B cell (primary cell): ENCODE measurements at regions of chr5 and their contacts with region 1.

Region 1: DNA sequence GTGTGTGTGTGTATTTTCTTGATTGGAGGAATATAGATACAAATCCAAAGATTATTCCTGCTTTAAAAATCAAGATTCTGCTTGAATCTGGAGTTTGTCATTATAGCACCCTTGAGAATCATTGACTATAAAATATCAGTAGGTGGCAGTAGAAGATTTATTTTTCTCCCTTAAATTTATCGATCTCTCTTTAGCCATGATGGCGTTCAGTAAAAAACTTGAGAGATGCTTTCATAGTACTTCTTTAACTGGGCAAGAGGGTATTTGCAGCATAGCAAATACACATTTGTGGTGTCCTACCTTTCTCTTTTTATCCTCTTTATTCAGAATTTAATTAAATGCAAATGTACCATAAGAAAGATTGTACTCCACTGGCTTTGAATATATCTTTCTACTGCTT is 307.7 kb downstream of the ADGRV1 start:
- DNase-seq: peak; percentile 47
- ATAC-seq: peak; percentile 31
- H3K4me3 ChIP-seq: no peak overlapping the region
- H3K4me3 Mint-ChIP-seq: no peak overlapping the region
- H3K27ac ChIP-seq: no peak overlapping the region
- H3K27ac Mint-ChIP-seq: no peak overlapping the region
- H3K4me1 ChIP-seq: no peaks in the 10 kb centered on the region
- H3K4me1 Mint-ChIP-seq: peaks cover 2% of the 10 kb centered on the region
- H3K27me3 ChIP-seq: peaks cover 0 to 3% (median 0%) of the 10 kb centered on the region in 4 experiments
- H3K27me3 Mint-ChIP-seq: peaks cover 11% of the 10 kb centered on the region
- CTCF ChIP-seq: peak; percentile 73

Region 2: GRCh38 chr5:90854169-90854568 is 12.2 kb before region 1 on chr5:
- CTCF ChIA-PET with region 1: interaction called, 11 read pairs
- POLR2A ChIA-PET with region 1: no interaction called
- intact Hi-C with region 1: no loop called
- DNase-seq: no peak
- ATAC-seq: no peak
- H3K4me3 ChIP-seq: no peak overlapping the region
- H3K4me3 Mint-ChIP-seq: no peak overlapping the region
- H3K27ac ChIP-seq: no peak overlapping the region
- H3K27ac Mint-ChIP-seq: no peak overlapping the region
- H3K4me1 ChIP-seq: no peaks in the 10 kb centered on the region
- H3K4me1 Mint-ChIP-seq: no peaks in the 10 kb centered on the region
- H3K27me3 ChIP-seq: no peaks in the 10 kb centered on the region
- H3K27me3 Mint-ChIP-seq: no peaks in the 10 kb centered on the region
- CTCF ChIP-seq: no peak

Region 3: DNA sequence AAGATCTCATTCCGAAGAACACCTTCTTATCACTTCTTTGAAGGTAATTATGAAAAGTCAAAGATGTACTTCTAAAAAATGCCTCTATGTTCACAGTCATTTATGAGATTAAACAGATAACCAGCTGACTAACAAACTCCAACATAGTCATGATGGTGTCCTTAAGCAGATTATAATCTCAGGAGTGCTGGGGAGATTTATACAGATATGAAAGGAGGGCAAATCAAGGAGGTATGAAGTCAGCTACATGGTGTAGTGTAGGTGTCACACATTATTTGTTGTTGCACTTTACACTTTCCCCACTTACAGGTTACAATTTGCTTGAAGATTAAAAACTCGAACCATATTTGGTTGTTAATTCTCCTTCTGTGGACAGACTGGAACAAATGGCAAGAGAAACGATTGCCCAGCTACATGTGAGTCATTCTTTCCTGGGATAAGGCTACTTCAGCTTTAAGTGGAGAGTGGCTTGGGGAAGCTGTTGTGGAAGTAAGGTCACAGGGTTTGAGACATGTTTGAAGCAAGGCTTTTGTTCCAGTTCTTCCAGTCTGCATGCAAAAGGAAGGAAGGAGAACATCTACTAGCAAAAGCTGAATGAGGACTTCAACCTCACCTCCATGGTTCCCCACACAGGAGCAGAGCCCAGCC is 12.3 kb after region 1 on chr5:
- CTCF ChIA-PET with region 1: interaction called, 15 read pairs
- POLR2A ChIA-PET with region 1: no interaction called
- intact Hi-C with region 1: no loop called
- DNase-seq: no peak
- ATAC-seq: no peak
- H3K4me3 ChIP-seq: no peak overlapping the region
- H3K4me3 Mint-ChIP-seq: no peak overlapping the region
- H3K27ac ChIP-seq: no peak overlapping the region
- H3K27ac Mint-ChIP-seq: no peak overlapping the region
- H3K4me1 ChIP-seq: no peaks in the 10 kb centered on the region
- H3K4me1 Mint-ChIP-seq: no peaks in the 10 kb centered on the region
- H3K27me3 ChIP-seq: no peaks in the 10 kb centered on the region
- H3K27me3 Mint-ChIP-seq: peaks cover 17% of the 10 kb centered on the region
- CTCF ChIP-seq: no peak

Region 4: DNA sequence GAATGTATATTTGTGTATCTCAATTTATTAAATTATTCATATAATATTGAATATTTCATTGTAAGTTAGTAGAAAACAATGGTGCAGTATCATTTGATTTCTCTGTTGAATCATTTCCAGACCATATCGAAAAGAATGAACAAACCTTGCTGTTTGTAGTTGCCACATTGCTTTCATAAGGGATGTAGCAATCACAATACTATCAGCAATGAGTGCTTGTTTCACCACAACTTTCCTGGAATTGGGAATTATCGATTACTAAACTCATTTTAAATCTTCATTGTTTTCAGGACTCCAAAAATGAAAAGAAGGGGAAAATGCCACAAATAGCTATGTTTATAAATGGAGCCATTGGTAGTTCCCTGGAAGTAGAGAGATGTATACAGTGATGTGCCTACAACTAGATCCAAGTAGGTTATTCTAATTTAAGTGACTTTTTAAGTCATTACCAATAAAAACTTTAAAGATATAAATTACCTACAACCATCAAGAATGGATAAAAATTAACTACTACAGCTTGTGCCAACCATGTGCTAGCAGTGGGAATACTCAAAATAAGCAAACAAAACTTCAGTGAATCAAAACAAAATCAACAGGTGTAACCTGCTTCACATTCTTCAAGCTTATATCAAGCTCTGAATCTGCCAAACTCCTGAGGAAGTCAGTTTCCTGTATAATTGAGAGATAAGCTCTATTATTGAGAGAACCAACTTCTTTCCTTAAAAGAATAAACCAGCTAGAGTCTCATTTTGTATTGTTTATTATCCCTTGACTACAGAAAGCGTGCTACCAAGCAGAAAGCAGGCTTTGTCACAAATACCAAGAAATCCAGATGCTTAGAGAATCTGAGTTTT is 50.8 kb after region 1 on chr5:
- CTCF ChIA-PET with region 1: no interaction called
- POLR2A ChIA-PET with region 1: no interaction called
- intact Hi-C with region 1: no loop called
- DNase-seq: no peak
- ATAC-seq: no peak
- H3K4me3 ChIP-seq: no peak overlapping the region
- H3K4me3 Mint-ChIP-seq: no peak overlapping the region
- H3K27ac ChIP-seq: no peak overlapping the region
- H3K27ac Mint-ChIP-seq: no peak overlapping the region
- H3K4me1 ChIP-seq: no peaks in the 10 kb centered on the region
- H3K4me1 Mint-ChIP-seq: no peaks in the 10 kb centered on the region
- H3K27me3 ChIP-seq: peaks cover 0 to 2% (median 0%) of the 10 kb centered on the region in 4 experiments
- H3K27me3 Mint-ChIP-seq: peaks cover 8% of the 10 kb centered on the region
- CTCF ChIP-seq: no peak

Region 5: GRCh38 chr5:90932052-90932699 is 65.8 kb after region 1 on chr5:
- CTCF ChIA-PET with region 1: interaction called, 10 read pairs
- POLR2A ChIA-PET with region 1: no interaction called
- intact Hi-C with region 1: no loop called
- DNase-seq: peak; percentile 39
- ATAC-seq: no peak
- H3K4me3 ChIP-seq: no peak overlapping the region
- H3K4me3 Mint-ChIP-seq: no peak overlapping the region
- H3K27ac ChIP-seq: no peak overlapping the region
- H3K27ac Mint-ChIP-seq: no peak overlapping the region
- H3K4me1 ChIP-seq: no peaks in the 10 kb centered on the region
- H3K4me1 Mint-ChIP-seq: no peaks in the 10 kb centered on the region
- H3K27me3 ChIP-seq: peaks cover 0 to 5% (median 0%) of the 10 kb centered on the region in 4 experiments
- H3K27me3 Mint-ChIP-seq: peaks cover 10% of the 10 kb centered on the region
- CTCF ChIP-seq: peak; percentile 70

Region 6: DNA sequence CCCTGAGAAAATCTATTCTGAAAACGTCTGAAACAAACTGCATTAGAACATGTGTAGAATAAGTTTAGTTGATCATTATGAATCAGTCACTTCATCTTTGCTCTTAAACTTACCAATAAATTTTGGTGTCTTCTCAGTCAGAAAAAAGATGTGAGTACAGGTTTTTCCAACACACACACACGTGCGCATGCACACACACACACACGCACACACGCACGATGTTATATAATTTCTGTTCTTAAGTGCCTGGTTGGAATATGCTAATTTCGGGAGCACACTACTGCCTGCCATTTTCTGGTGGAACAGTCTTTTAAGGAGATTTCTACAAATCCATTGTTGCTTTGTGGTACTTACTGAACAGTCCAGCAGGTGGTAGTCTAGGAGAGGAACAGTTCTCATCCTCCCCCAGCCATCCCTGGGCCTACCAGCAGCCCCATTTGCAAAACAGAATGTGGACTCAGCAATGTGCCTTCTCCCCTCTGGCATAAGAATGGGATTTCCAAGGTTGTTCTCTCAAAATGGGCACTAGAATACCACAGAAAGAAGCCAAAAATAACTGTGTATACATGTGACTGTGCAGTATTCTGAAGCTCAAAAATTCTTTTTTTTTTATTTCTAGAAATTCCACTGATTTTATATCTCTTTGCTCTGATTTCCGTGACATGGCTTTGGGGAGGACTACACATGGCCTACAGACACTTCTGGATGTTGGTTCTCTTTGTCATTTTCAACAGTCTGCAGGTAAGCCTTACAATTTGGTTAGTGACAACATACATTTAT is 235.5 kb after region 1 on chr5:
- CTCF ChIA-PET with region 1: no interaction called
- POLR2A ChIA-PET with region 1: no interaction called
- intact Hi-C with region 1: loop called (anchors 10 kb)
- DNase-seq: peak; percentile 65
- ATAC-seq: peak; percentile 84
- H3K4me3 ChIP-seq: no peak overlapping the region
- H3K4me3 Mint-ChIP-seq: no peak overlapping the region
- H3K27ac ChIP-seq: no peak overlapping the region
- H3K27ac Mint-ChIP-seq: no peak overlapping the region
- H3K4me1 ChIP-seq: no peaks in the 10 kb centered on the region
- H3K4me1 Mint-ChIP-seq: no peaks in the 10 kb centered on the region
- H3K27me3 ChIP-seq: no peaks in the 10 kb centered on the region
- H3K27me3 Mint-ChIP-seq: peaks cover 4% of the 10 kb centered on the region
- CTCF ChIP-seq: peak; percentile 67

Region 7: GRCh38 chr5:91225848-91226686 is 359.7 kb after region 1 on chr5:
- CTCF ChIA-PET with region 1: no interaction called
- POLR2A ChIA-PET with region 1: no interaction called
- intact Hi-C with region 1: loop called (anchors 5 kb)
- DNase-seq: peak; percentile 59
- ATAC-seq: peak; percentile 63
- H3K4me3 ChIP-seq: no peak overlapping the region
- H3K4me3 Mint-ChIP-seq: no peak overlapping the region
- H3K27ac ChIP-seq: no peak overlapping the region
- H3K27ac Mint-ChIP-seq: no peak overlapping the region
- H3K4me1 ChIP-seq: no peaks in the 10 kb centered on the region
- H3K4me1 Mint-ChIP-seq: no peaks in the 10 kb centered on the region
- H3K27me3 ChIP-seq: peaks cover 0 to 4% (median 2%) of the 10 kb centered on the region in 4 experiments
- H3K27me3 Mint-ChIP-seq: peaks cover 9% of the 10 kb centered on the region
- CTCF ChIP-seq: peak; percentile 62